ENCODE measurements at regions of chr11 and their contacts with region 1.

Region 1: DNA sequence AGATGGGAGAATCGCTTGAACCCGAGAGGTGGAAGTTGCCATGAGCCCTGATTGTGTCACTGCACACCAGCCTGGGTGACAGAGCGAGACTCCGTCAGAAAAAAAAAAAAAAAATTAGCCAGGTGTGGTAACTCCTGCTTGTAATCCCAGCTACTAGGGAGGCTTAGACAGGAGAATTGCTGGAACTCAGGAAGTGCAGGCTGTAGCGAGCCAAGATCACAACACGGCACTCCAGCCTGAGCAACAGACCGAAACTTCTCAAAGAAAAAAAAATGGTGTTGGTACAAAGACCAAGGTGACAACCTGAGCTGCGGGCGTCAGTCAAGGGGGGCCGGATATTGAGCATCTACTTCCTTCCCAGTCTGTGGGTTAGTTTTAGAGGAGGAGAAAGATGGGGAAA is 48.4 kb upstream of the HSPA8 start:
- DNase-seq: no peak
- ATAC-seq: no peak
- H3K4me3 ChIP-seq: no peak overlapping the region
- H3K27ac ChIP-seq: no peak overlapping the region
- H3K4me1 ChIP-seq: no peaks in the 10 kb centered on the region
- H3K27me3 ChIP-seq: no peaks in the 10 kb centered on the region
- CTCF ChIP-seq: no peak

Region 2: DNA sequence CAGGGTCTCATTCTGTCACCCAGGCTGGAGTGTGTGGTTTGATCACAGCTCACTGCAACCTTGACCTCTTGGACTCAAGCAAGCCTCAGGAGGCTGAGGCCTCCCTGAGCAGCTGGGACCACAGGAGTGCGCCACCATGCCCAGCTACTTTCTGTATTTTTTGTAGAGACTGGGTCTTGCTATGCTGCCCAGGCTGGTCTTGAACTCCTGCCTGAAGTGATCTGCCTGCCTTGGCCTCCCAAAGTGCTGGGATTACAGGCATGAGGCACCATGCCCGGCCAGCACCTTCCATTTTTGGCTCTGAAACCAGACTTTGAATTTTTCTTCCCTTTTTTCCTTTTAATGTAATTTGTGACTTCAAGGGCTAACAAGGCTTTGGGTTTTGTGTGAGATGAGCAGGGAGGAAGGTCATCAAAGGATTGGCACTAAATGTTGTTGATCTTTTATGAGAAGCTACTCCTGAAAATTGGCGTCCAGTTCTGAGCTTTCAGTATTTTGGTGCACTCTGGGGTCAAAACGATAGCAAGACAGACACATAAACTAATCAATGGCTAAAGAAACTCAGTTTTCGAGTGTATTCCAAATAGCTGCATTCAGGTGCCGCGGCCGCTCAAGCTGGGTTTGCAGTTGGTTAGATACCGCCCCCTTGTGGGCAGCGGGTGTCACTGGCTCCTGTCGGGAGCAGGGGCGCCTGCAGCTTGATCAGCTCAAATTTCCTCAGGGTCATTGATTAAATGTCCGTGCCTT is 136.6 kb after region 1 on chr11:
- intact Hi-C with region 1: loop called (anchors 5 kb)
- DNase-seq: peak; percentile 88
- ATAC-seq: peak; percentile 96
- H3K4me3 ChIP-seq: no peak overlapping the region
- H3K27ac ChIP-seq: no peak overlapping the region
- H3K4me1 ChIP-seq: no peaks in the 10 kb centered on the region
- H3K27me3 ChIP-seq: no peaks in the 10 kb centered on the region
- CTCF ChIP-seq: peak; percentile 98